GM10248 (cell line): ENCODE measurements at regions of chr14 and their contacts with region 1.

Region 1: GRCh38 chr14:53539489-53540126 is 386.5 kb upstream of the DDHD1 start:
- DNase-seq: peak; percentile 51
- CTCF ChIP-seq: peak; percentile 93

Region 2: DNA sequence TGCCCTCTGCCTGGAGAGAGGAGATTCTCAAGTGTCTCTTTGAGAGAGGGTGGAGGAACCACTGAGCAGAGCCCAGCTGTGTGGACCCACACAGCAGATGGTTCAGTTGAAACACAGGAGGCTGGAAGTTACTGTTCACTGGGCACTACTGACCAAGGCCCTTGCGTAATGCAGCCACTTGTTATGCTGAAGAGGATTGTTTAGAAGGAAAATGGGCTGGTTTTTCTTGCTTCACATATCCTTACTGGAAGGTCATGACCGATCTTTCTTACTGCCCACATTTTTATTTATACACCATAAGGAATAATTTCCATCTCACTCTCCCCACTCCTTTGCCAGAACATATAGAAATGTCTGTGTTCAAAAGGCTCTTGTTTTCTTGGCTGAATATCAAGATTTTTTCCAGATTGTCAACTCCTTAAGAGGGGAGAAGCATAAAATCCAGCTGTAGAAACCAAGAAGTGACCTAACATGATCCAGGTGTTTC is 11.4 kb before region 1 on chr14:
- CTCF ChIA-PET with region 1: interaction called, 12 read pairs
- POLR2A ChIA-PET with region 1: no interaction called
- DNase-seq: no peak
- CTCF ChIP-seq: no peak

Region 3: DNA sequence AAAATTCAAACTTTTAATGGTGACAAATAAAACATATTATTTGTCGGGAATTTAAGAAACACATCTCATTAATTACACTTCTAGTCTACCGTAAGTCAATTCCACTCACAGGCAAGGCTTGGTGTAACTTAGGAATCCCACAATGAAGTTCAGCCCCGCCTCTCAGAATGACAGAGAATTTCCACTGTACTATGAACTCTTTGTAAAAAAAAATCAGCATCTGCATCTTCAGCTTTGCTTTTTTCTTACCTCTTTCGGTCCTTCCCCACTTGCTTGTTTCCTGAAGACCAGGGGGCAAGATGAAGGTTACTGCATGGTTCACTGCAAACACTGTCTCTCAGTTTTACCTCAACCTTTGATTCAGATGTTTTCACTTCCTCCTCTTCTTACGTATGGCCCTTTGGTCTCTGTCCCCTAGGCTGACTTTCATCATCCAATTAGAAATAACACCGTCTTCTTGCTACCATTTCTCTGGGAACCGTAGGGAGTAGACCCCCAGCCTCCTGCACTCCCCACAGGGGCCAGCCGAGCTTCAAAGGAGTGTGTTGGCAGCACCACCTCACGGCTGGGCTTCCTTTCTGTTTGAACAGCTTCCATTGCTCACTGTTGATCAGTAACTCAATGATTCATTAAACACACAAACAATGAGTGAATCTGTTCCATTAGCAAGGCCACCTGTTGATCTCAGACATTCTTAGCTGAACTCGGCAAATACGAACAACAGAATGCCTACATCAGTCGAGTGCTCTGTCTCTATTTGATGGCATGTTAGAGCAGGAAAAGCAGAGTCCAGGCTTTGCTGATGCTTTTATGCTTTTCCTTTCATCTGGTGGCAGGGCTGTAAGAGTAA is 74.0 kb after region 1 on chr14:
- CTCF ChIA-PET with region 1: interaction called, 10 read pairs
- POLR2A ChIA-PET with region 1: no interaction called
- DNase-seq: peak; percentile 81
- CTCF ChIP-seq: no peak